Activated T-helper 1 cell treated with anti-CD3 and anti-CD28 coated beads, Interleukin-12 subunit alpha, Interleukin-12 subunit beta, Interleukin-2, Interleukin-4 antibody, amounts not matched to agents 30 ng/mL and 10 ng/mL and 1 ng/mL, durations not matched to agents 14 hours and 24 hours and 36 hours (primary cell): ENCODE measurements at regions of chr20 and their contacts with region 1.

Region 1: DNA sequence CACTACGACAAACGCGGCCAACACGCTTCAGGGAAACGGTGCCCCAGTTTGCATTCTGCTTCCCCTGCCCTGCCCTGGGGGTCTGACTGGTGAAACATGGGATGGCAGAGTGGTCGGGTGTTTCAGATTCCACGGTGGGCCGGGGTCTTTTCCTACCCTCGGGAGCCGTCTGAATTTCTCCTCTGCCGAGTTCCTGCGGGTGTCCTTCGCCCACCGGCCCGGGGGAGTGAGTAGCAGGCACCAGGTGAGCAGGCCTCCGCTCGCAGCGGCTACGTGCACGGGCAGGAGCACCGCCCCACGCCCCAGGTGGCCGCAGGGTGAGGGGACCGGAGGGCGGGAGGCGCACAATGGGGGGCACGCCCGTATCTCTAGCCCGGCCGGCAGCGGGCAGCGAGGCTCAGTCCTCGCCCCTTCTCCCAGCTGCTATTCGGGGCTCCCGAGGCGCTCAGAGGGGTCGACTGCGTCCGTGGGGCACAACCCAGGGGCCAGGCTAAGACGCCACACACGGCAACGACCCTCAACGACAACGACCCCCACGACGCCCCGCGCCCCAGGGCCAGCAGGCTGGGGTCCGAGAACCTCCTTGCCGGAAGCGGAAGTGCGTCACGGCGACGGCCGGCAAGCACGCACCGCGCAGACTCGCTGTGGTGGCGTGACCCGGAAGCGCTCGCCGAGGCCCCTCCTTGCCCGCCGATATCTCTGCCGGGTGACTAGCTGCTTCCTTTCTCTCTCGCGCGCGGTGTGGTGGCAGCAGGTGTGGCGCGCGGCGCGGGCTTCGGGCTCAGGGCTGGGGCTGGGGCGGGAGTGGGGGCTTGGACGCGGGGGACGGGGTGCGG is at the start of gene RPS21:
- DNase-seq: peak; percentile 92
- H3K4me3 Mint-ChIP-seq: peak within 1 kb of the TSS; percentile 93
- H3K27ac Mint-ChIP-seq: peak within 1 kb of the TSS; percentile 87
- H3K4me1 Mint-ChIP-seq: peaks cover 39% of the 10 kb centered on the region
- H3K27me3 Mint-ChIP-seq: no peaks in the 10 kb centered on the region
- total RNA-seq, gene RPS21: 1,907 and 1,920 TPM in 2 replicates

Region 2: GRCh38 chr20:62020935-62021701 is 365.5 kb before region 1 on chr20:
- intact Hi-C with region 1: no loop called
- DNase-seq: no peak
- H3K4me3 Mint-ChIP-seq: no peak overlapping the region
- H3K27ac Mint-ChIP-seq: no peak overlapping the region
- H3K4me1 Mint-ChIP-seq: peaks cover 16% of the 10 kb centered on the region
- H3K27me3 Mint-ChIP-seq: no peaks in the 10 kb centered on the region

Region 3: DNA sequence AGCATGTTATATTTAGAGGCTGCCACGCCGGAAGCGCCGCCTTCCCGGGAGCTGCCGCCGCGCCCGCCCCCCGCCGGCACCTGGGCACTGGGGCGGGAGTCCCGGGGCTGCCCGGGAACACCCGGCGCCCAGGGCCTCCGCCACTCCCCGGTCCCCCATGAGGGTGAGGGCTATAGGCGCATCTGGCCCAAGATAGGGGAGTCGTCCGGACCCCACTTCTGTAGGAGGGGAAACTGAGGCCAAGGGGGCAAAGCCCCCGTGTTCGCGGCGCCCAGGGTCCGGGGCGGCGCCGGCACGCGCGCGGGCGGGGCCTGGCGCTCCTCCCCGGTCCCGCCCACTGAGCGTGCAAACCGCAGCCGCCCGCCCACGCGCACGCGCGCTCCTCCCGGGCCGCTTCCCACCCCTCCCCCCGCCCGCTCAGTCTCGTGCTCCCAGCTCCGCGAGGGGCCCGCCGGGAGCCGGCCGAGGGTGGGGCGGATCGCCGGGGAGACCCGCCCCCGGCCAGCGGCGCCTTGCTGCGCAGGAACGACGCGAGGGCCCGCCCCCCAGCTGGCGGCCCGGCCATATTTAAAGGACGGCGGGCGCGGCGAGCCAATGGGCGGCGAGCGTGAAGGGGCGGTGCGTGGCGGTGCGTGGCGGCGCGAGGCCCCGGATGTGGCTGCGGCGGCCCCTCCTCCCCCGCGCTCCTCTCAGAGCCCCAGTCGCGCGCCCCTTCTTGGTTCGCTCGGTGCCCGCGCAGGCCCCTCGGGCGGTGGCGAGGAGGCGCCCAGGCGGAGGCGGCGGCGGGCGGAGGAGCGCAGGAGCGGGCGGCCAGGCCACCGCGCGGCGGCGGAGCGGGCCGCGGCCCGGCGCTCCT is 264.6 kb before region 1 on chr20 and contains the start of gene LSM14B:
- intact Hi-C with region 1: loop called (anchors 1 kb)
- DNase-seq: peak; percentile 95
- H3K4me3 Mint-ChIP-seq: peak within 1 kb of the TSS; percentile 90
- H3K27ac Mint-ChIP-seq: peak within 1 kb of the TSS; percentile 94
- H3K4me1 Mint-ChIP-seq: peaks cover 32% of the 10 kb centered on the region
- H3K27me3 Mint-ChIP-seq: no peaks in the 10 kb centered on the region
- total RNA-seq, gene LSM14B: 39.6 and 43.2 TPM in 2 replicates

Region 4: DNA sequence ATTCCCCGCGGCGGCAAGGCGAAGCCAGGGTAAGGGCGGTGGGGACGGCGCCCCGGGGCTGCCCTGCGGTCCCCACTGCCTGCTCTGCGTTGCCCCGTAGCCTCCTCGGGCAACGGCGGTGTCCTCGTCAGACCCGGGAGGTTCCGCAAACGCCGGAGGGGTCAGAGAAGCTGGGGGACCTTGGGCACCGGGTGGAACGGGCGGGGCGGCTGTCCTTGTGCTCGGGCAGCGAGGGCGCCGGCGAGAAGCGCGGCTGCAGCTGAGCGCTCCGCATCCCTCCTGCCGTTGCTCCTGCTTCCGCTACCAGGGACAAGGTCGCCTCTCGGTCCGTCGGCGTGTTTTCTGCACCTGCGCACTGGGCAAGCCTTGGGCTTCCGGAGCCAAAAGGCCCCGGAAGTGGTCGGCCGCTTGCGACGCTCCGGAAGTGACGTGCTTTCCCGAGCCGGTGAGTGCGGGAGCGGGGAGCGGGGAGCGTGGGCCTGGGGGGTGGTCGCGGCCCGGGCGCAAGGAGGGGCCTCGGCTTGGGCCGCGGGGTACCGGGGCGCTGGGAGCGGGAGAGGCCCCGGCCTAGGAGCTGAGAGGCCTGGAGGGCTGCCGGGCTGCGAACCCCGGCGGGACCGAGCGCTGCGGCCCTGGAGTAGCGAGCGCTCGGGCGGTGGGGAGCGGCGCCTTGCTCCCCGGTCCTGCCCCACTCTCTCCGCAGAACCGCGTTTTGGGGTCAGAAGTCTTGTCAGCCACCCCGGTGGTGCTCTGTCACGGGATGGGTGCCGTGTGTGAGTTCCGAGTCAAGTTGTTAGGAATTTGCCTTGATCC is 203.8 kb before region 1 on chr20 and contains the start of gene MTG2:
- intact Hi-C with region 1: loop called (anchors 2 kb)
- DNase-seq: peak; percentile 95
- H3K4me3 Mint-ChIP-seq: peak within 1 kb of the TSS; percentile 92
- H3K27ac Mint-ChIP-seq: peak within 1 kb of the TSS; percentile 93
- H3K4me1 Mint-ChIP-seq: peaks cover 39% of the 10 kb centered on the region
- H3K27me3 Mint-ChIP-seq: no peaks in the 10 kb centered on the region
- total RNA-seq, gene MTG2: 45.4 and 46.3 TPM in 2 replicates

Region 5: GRCh38 chr20:62274332-62274950 is 112.2 kb before region 1 on chr20:
- intact Hi-C with region 1: no loop called
- DNase-seq: no peak
- H3K4me3 Mint-ChIP-seq: no peak overlapping the region
- H3K27ac Mint-ChIP-seq: no peak overlapping the region
- H3K4me1 Mint-ChIP-seq: no peaks in the 10 kb centered on the region
- H3K27me3 Mint-ChIP-seq: no peaks in the 10 kb centered on the region

Region 6: DNA sequence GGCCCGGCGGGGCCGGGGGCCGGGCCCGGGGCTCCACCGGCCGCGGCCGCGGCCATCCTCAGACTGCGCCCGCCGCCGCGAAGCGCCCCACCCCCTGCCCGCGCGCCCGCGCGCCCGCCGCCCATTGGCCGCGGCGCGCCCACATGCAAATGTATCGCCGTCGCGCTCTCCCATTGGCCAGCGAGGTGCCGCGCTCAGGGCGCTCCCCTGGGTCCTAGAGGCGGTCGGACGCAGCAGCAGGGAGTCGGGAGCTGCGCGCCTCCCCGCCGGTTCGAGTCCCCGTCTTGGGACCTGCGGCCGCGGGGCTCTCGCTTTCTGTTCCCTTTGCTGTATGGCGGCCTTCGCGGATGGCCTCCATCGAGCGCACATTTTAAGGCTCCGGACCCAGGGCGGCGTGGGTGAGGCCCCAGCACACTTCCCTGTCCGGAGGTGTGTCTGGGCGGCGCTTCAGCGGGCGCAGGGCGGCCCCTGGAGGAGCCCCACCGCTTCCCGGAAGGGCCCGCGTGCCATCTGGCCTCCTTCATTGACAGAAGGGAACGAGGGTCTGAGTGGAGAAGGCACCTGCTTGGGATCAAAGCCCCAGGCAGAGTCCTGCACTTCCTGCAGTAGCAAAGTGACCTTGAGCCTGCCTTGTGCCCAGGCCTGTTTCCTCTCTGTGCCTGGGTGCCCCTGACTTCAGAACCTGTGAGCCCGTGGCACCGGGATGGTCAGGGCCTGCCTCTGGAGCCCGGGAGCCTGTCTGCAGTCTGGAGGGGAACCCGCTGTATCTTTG is 20.8 kb after region 1 on chr20 and contains the start of gene CABLES2:
- intact Hi-C with region 1: loop called (anchors 1 kb)
- DNase-seq: peak; percentile 90
- H3K4me3 Mint-ChIP-seq: peak within 1 kb of the TSS; percentile 85
- H3K27ac Mint-ChIP-seq: peak within 1 kb of the TSS; percentile 87
- H3K4me1 Mint-ChIP-seq: peaks cover 10% of the 10 kb centered on the region
- H3K27me3 Mint-ChIP-seq: no peaks in the 10 kb centered on the region
- total RNA-seq, gene CABLES2: 12.9 and 15.7 TPM in 2 replicates

Region 7: DNA sequence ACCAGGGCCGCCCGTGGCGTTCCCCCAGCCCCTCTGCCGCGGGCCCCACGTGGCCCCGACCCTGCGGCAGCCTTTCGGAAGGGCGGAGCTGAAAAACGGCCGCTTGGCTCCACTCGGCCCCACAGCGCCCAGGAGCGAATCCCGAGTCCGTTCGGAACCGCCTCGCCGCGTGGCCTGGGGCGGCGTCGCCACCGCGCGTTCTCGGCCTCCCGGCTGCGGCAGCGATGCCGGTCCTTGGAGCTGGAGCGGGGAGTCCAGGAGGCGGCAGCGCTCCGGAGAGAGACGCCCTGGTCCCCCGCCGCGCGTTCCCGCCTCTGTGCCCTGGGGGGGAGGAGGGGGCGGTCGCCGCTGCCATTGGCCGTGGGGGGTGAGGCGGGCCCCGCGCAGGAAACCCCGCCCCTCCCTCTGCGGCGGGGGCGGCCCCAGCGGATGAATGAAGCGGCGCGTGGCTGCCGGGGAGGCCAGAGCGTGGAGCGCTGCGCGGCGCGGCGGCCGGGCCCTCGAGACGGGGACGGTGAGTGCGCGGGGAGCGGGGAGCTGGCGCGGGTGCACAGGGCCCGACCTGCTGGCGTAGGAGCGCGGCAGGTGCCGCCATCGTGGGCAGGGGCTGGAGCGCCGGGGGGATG is 255.6 kb after region 1 on chr20 and contains the start of gene SLCO4A1:
- intact Hi-C with region 1: loop called (anchors 5 kb)
- DNase-seq: peak; percentile 90
- H3K4me3 Mint-ChIP-seq: peak within 1 kb of the TSS; percentile 85
- H3K27ac Mint-ChIP-seq: peak within 1 kb of the TSS; percentile 78
- H3K4me1 Mint-ChIP-seq: peaks cover 16% of the 10 kb centered on the region
- H3K27me3 Mint-ChIP-seq: peaks cover 16% of the 10 kb centered on the region
- total RNA-seq, gene SLCO4A1: 47.6 and 49.8 TPM in 2 replicates